ENCODE measurements at regions of chr2 and their contacts with region 1.

Region 1: DNA sequence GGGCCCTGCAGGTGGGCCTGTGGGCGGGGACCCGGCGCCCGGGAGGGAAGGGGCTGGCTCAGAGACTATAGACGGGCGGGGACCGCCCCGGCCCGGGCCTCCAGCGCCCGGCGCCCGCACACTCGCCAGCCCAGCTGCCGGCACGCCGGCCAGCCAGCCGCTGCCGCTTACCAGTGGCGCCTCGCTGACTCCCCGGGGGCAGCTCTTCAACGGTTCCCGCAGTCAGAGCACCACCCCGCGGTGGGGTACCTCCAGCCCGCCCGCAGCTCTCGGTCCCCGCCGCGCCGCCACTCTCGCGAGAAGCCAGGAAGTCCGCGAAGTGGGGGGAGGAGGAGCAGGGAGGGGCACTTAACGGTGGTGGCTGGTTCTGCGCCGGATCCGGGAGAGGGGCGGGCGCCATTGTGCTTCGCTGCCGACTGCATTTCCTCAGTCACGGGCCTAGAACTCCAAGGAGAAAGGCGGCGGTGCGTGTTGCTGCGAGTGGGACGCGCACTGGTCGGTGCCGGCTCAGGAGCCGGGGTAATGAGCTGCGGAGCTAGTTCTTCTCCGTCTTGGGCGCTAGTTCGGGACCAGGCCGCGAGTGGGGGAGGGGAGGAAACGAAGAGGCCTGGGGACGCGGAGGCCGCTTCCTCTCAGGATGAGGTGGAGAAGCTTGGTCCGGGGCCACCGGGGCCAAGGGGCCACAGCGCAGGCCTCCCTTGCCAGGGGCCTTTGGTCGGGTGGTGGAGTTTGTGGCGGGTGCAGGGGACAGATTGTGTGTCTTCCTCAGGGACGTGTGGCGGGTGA is at the start of gene MARCHF7:
- DNase-seq: peak; percentile 95 to 97
- ATAC-seq: peak; percentile 92 to 94
- H3K4me3 ChIP-seq: peak within 1 kb of the TSS; percentile 92 to 93 (median 92)
- H3K27ac ChIP-seq: peak within 1 kb of the TSS; percentile 97 to 99 (median 98)
- H3K4me1 ChIP-seq: peaks cover 14 to 44% of the 10 kb centered on the region in 2 donors
- H3K27me3 ChIP-seq: no peaks in the 10 kb centered on the region
- CTCF ChIP-seq: peak; percentile 51 to 66 (median 63)
- POLR2A ChIP-seq: peak; percentile 95 to 97
- total RNA-seq, gene MARCHF7: 88.6 to 125 (median 93.4) TPM

Region 2: DNA sequence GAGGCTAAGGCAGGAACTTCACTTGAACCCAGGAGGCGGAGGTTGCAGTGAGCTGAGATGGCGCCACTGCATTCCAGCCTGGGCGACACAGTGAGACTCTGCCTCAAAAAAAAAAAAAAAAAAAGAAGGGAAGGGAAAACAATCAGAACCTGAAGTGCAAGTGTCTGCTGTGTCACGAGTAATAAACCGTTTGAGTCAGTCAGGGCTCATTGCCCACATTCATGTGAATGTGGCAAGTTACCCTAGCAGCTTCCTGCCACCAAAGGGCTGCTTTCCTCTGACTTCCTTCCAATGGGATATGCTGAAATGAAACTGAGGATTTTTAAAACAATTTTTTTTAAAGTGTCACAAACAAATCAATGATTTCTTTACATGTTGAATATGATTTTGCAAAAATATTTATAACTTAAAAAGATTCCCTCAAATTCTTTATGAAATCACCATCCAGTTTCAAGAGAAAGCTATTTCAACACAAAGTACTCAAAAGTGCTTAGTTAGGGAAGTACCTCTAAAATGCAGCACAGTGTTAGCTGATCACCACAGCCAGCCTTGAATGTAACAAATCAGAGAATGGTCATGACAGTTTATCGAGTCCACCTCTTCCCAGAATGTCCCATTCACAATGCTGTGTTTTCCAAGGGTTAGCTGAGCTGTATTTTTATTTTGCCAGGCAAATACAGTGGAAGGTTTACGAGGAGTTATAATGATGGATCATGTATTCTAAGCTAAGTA is 462.2 kb before region 1 on chr2:
- in situ Hi-C with region 1: no loop called
- intact Hi-C with region 1: loop called (anchors 5 kb)
- DNase-seq: peak; percentile 65 to 79
- ATAC-seq: peak; percentile 99
- H3K4me3 ChIP-seq: peak overlapping the region in 2 of 4 donors; percentile 18 to 19
- H3K27ac ChIP-seq: peak overlapping the region; percentile 53 to 66 (median 64)
- H3K4me1 ChIP-seq: peaks cover 10 to 17% of the 10 kb centered on the region in 2 donors
- H3K27me3 ChIP-seq: no peaks in the 10 kb centered on the region
- CTCF ChIP-seq: no peak
- POLR2A ChIP-seq: no peak

Region 3: GRCh38 chr2:159286709-159287441 is 425.5 kb before region 1 on chr2:
- in situ Hi-C with region 1: no loop called
- intact Hi-C with region 1: loop called (anchors 1 kb)
- DNase-seq: peak; percentile 95 to 98
- ATAC-seq: peak; percentile 93 to 94
- H3K4me3 ChIP-seq: peak overlapping the region; percentile 83 to 91 (median 88)
- H3K27ac ChIP-seq: peak overlapping the region; percentile 86 to 95 (median 89)
- H3K4me1 ChIP-seq: peaks cover 8 to 10% of the 10 kb centered on the region in 2 donors
- H3K27me3 ChIP-seq: no peaks in the 10 kb centered on the region
- CTCF ChIP-seq: no peak
- POLR2A ChIP-seq: peak; percentile 49 to 65

Region 4: DNA sequence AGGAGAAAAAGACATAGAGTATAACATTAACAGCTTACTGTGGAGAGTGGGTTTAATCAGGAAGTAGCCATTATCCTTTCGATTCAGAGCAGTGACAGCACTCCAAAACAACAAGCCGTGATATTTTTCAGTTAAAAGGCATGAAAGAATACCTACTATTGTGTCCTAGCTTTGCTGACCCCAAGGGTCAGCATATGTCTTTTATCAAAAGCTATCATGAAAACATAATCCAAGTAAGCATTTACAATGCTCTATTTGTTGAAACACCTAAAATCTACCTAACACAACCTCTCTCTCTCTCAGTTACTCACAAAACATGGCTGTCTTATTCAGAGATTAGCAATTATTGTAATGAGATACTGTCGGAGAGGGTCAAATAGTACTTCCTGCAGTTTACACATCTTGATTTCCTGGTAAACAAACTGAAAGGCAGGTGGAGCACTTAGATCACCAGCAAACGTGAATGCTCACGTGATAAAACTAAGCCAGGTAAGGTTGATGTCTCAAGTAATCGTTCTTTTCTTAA is 196.0 kb before region 1 on chr2:
- in situ Hi-C with region 1: loop called in 1 of 4 experiments (anchors 25 kb)
- intact Hi-C with region 1: loop called (anchors 2 kb)
- DNase-seq: peak; percentile 10 to 22
- ATAC-seq: peak; percentile 98 to 99
- H3K4me3 ChIP-seq: peak overlapping the region; percentile 53 to 63 (median 59)
- H3K27ac ChIP-seq: peak overlapping the region; percentile 66 to 81 (median 80)
- H3K4me1 ChIP-seq: peaks cover 29 to 52% of the 10 kb centered on the region in 2 donors
- H3K27me3 ChIP-seq: no peaks in the 10 kb centered on the region
- CTCF ChIP-seq: peak in 3 of 5 experiments; percentile 13 to 40 (median 14)
- POLR2A ChIP-seq: peak in 1 of 2 donors; percentile 35

Region 5: GRCh38 chr2:159728629-159729028 is 16.3 kb after region 1 on chr2:
- in situ Hi-C with region 1: no loop called
- intact Hi-C with region 1: no loop called
- DNase-seq: no peak
- ATAC-seq: no peak
- H3K4me3 ChIP-seq: no peak overlapping the region
- H3K27ac ChIP-seq: peak overlapping the region in 2 of 4 donors; percentile 4 to 18
- H3K4me1 ChIP-seq: peaks cover 11 to 13% of the 10 kb centered on the region in 2 donors
- H3K27me3 ChIP-seq: no peaks in the 10 kb centered on the region
- CTCF ChIP-seq: no peak
- POLR2A ChIP-seq: no peak

Region 6: GRCh38 chr2:159797543-159798375 is 85.4 kb after region 1 on chr2 and contains the start of gene CD302:
- in situ Hi-C with region 1: no loop called
- intact Hi-C with region 1: loop called (anchors 5 kb)
- DNase-seq: peak; percentile 36 to 50
- ATAC-seq: peak; percentile 36 to 70
- H3K4me3 ChIP-seq: peak within 1 kb of the TSS; percentile 67 to 96 (median 78)
- H3K27ac ChIP-seq: peak within 1 kb of the TSS; percentile 56 to 78 (median 72)
- H3K4me1 ChIP-seq: peaks cover 0 to 9% of the 10 kb centered on the region in 2 donors
- H3K27me3 ChIP-seq: peaks cover 0 to 5% (median 0%) of the 10 kb centered on the region in 3 donors
- CTCF ChIP-seq: no peak
- POLR2A ChIP-seq: peak in 1 of 2 donors; percentile 22
- total RNA-seq, gene CD302: 6.7 to 10.3 (median 7.7) TPM

Measured in gastrocnemius medialis (tissue), 4 donors.